Calu3 (cell line): ENCODE measurements at regions of chr7 and their contacts with region 1.

Region 1: GRCh38 chr7:90752051-90752450 is 155.9 kb downstream of the CDK14 start:
- DNase-seq: no peak
- H3K4me3 Mint-ChIP-seq: no peak overlapping the region
- H3K27ac Mint-ChIP-seq: no peak overlapping the region
- H3K4me1 Mint-ChIP-seq: peaks cover 9% of the 10 kb centered on the region
- H3K27me3 Mint-ChIP-seq: no peaks in the 10 kb centered on the region
- CTCF ChIP-seq: no peak

Region 2: DNA sequence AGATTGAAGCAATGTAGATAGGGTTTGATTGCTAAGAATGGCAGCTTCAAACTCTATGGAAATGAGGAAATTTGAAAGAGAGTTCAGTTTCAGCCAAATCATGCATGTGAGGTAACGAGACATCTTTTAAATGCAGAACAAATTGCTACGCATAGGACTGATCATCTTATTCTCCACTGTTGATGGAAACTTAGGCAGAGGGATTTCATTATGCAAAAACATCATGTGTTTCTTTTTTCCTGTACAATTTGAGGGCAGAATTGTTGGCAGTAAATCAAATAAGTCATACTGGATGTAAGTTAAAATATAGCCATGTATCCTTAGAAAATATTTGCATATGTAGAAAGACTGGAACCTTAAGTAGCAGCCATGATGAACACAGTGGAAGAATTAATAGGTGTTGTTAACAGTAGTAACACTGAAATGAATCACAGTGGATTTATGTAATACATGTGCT is 171.5 kb after region 1 on chr7:
- CTCF ChIA-PET with region 1: no interaction called
- intact Hi-C with region 1: loop called (anchors 10 kb)
- DNase-seq: no peak
- H3K4me3 Mint-ChIP-seq: no peak overlapping the region
- H3K27ac Mint-ChIP-seq: no peak overlapping the region
- H3K4me1 Mint-ChIP-seq: no peaks in the 10 kb centered on the region
- H3K27me3 Mint-ChIP-seq: no peaks in the 10 kb centered on the region
- CTCF ChIP-seq: no peak